AG04450 (cell line): ENCODE measurements at regions of chr17 and their contacts with region 1.

Region 1: DNA sequence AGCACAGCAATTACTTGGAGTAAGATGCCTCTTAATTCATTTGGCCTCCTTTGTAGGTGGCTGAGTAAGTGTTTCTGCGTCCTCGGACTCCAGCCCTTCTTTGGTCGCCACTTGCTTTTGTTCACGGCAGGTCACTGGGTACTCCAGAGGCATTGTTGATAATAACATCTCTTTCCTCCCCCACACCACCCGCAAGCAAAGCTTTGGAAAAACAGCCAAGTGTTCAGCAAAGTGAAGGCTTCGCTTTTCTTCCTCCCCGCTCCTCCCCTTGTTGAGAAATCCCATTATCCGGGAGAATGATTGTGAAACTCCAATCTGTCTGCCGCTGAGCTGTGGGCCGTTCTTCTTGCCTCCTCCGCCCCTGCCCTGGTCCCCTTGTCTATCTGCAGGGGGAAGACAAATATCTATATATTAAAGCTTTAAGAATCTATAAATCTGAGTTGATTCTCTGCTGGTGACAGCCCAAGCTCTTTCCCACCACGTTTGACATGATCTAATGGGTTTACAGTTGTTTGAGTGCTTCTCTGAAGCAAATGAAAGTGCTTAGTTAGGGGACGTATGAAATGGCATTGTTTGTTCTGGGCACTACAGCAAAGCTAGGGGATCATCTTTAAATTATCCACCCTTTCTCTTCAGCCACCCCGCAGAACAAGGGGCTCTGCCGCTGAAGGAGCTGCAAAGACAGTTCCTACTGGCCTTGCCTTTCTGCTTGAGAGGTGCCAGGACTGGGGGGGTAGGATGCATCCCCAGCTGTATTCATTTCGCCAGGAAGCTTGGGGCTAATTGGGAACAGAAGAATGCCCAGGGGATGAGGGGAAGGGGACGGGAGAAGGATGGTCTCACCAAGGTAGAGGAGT is 167.1 kb downstream of the CCDC182 start:
- DNase-seq: peak; percentile 38
- H3K4me3 ChIP-seq: peak overlapping the region; percentile 47
- H3K27ac ChIP-seq: peak overlapping the region; percentile 40
- H3K27me3 ChIP-seq: no peaks in the 10 kb centered on the region
- CTCF ChIP-seq: no peak

Region 2: GRCh38 chr17:57561072-57561861 is 16.7 kb before region 1 on chr17:
- CTCF ChIA-PET with region 1: no interaction called
- POLR2A ChIA-PET with region 1: no interaction called
- DNase-seq: no peak
- H3K4me3 ChIP-seq: no peak overlapping the region
- H3K27ac ChIP-seq: no peak overlapping the region
- H3K27me3 ChIP-seq: no peaks in the 10 kb centered on the region
- CTCF ChIP-seq: no peak

Region 3: DNA sequence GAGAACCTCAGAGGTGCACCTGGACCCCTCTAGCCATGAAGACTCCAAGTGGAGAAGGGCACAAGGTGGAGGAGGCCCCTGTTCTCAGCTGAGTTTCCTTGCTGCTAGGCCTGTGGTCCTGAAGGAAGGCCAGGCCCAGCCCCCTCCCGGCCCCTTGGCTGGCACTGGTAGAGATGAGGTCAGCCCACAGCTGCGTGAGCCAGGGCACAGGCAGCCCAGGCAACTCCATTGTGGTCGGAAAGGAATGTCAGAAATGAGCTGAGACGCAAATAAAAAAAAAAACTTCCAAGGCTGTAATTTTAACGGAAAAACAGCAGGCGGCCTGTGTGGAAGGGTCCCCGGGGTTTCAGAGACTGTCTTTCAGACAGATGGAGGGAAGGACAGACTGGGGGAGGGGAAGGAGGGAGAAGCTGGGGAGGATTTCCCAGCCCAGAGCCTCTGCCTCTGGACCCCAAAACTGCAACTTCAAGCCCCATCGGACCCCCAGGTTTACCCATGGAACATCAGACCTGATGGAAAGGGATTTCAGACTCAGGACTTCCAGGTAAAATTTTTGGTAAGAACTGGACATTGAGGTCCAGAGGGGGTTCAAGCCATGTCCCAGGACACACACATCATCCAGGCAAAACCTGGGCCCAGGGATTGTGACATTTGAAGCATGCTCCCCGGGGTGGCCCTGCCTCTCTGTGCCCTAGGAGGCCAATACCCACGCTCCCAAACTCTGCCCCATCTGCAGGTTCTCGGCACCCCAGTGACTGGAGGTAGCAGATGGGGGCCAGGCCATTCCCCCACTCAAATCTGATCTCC is 297.5 kb after region 1 on chr17:
- CTCF ChIA-PET with region 1: interaction called, 10 read pairs
- POLR2A ChIA-PET with region 1: no interaction called
- DNase-seq: peak; percentile 97
- H3K4me3 ChIP-seq: peak overlapping the region; percentile 42
- H3K27ac ChIP-seq: peak overlapping the region; percentile 100
- H3K27me3 ChIP-seq: no peaks in the 10 kb centered on the region
- CTCF ChIP-seq: peak; percentile 79